Activated CD8-positive, alpha-beta T cell treated with anti-CD3 and anti-CD28 coated beads, Interleukin-2, amount 10 ng/mL, durations not matched to agents 7 days and 5 days (primary cell): ENCODE measurements at regions of chr11 and their contacts with region 1.

Region 1: GRCh38 chr11:126194121-126194543 is 17.3 kb downstream of the RPUSD4 start:
- DNase-seq: peak; percentile 58
- ATAC-seq: peak; percentile 73
- H3K4me3 Mint-ChIP-seq: no peak overlapping the region
- H3K27ac Mint-ChIP-seq: no peak overlapping the region
- H3K4me1 Mint-ChIP-seq: no peaks in the 10 kb centered on the region
- H3K27me3 Mint-ChIP-seq: no peaks in the 10 kb centered on the region

Region 2: DNA sequence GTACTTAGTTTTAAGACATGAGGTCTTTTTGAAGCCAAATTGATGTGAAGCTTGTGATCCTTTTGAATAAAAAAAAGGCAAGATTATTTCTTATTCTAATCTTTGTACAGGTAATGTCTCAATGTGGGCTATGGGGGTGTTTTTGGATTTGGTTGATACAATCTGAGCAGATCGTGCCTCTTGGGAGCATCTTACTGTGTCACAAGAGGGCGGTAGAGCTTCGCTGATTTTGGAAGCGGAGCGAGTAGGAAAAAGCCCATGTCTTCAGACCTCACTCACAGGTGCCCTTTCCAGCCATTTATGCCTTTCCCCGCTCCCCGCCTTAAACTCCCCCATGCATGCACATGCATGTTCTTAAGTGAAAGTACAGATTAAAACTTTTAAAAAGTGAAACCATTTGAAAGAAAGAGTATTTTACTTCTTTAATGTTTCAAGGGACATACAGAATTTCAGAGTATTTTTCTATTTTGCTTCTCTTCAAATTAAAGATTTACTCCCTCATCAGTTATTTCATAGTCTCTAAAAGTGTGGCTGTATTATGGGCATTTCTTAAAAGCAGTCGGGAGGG is 271.0 kb before region 1 on chr11:
- CTCF ChIA-PET with region 1: interaction called, 40 read pairs
- POLR2A ChIA-PET with region 1: no interaction called
- DNase-seq: peak; percentile 74
- ATAC-seq: peak; percentile 86
- H3K4me3 Mint-ChIP-seq: no peak overlapping the region
- H3K27ac Mint-ChIP-seq: no peak overlapping the region
- H3K4me1 Mint-ChIP-seq: no peaks in the 10 kb centered on the region
- H3K27me3 Mint-ChIP-seq: peaks cover 12% of the 10 kb centered on the region

Region 3: GRCh38 chr11:125941619-125942611 is 252.2 kb before region 1 on chr11:
- CTCF ChIA-PET with region 1: interaction called, 32 read pairs
- POLR2A ChIA-PET with region 1: no interaction called
- DNase-seq: peak; percentile 67
- ATAC-seq: peak; percentile 76
- H3K4me3 Mint-ChIP-seq: no peak overlapping the region
- H3K27ac Mint-ChIP-seq: no peak overlapping the region
- H3K4me1 Mint-ChIP-seq: peaks cover 15% of the 10 kb centered on the region
- H3K27me3 Mint-ChIP-seq: peaks cover 2% of the 10 kb centered on the region

Region 4: GRCh38 chr11:125995313-125995712 is 198.8 kb before region 1 on chr11:
- CTCF ChIA-PET with region 1: no interaction called
- POLR2A ChIA-PET with region 1: no interaction called
- DNase-seq: no peak
- ATAC-seq: no peak
- H3K4me3 Mint-ChIP-seq: no peak overlapping the region
- H3K27ac Mint-ChIP-seq: no peak overlapping the region
- H3K4me1 Mint-ChIP-seq: no peaks in the 10 kb centered on the region
- H3K27me3 Mint-ChIP-seq: no peaks in the 10 kb centered on the region

Region 5: DNA sequence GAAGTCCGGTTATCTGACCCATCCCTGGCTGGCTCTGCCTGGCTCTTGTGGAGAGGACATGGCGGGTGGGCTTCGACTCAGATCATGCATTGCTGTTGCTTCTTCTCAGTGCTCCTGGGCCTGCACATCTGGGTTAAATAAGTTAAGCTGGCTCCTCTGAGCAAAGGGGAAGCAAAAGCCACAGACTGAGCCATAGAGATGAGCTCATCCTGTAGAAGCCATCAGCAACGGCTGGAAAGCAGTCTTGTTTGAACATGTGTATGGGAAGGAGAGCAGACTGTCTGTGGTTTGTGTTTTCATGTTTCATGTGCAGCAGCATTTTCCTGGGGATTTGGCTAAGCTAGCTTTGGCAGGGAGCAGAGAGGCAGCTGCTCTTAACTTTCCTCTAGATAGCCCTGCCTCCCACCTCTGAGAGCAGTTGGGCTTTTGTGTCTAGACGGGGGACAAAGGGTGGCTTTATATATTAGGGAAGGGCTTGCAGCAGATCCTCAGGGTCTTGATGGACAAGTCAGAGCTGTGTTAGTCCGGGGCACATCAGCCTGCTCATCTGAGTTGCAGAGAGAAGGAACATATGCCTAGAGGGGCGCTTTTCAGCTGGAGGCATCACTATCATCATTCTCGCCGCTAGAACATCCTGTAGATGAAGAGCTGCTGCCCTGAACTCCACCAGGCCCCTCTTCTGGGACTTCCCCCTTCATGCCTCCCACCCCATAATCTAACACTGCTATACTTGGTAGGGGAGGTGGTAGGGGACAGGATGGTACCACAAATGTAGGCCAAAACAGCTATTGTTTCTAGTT is 124.6 kb after region 1 on chr11:
- CTCF ChIA-PET with region 1: no interaction called
- POLR2A ChIA-PET with region 1: no interaction called
- DNase-seq: peak; percentile 61
- ATAC-seq: peak; percentile 85
- H3K4me3 Mint-ChIP-seq: peak overlapping the region; percentile 65
- H3K27ac Mint-ChIP-seq: peak overlapping the region; percentile 95
- H3K4me1 Mint-ChIP-seq: peaks cover 37% of the 10 kb centered on the region
- H3K27me3 Mint-ChIP-seq: no peaks in the 10 kb centered on the region